Activated CD8-positive, alpha-beta T cell treated with anti-CD3 and anti-CD28 coated beads, Interleukin-2, amount 10 ng/mL, durations not matched to agents 7 days and 5 days (primary cell): ENCODE measurements at regions of chr6 and their contacts with region 1.

Region 1: GRCh38 chr6:130223508-130223907 is 757 bp upstream of the SAMD3 start:
- DNase-seq: peak; percentile 86
- ATAC-seq: peak; percentile 97
- H3K4me3 Mint-ChIP-seq: peak overlapping the region; percentile 31
- H3K27ac Mint-ChIP-seq: peak overlapping the region; percentile 90
- H3K4me1 Mint-ChIP-seq: peaks cover 32% of the 10 kb centered on the region
- H3K27me3 Mint-ChIP-seq: no peaks in the 10 kb centered on the region

Region 2: DNA sequence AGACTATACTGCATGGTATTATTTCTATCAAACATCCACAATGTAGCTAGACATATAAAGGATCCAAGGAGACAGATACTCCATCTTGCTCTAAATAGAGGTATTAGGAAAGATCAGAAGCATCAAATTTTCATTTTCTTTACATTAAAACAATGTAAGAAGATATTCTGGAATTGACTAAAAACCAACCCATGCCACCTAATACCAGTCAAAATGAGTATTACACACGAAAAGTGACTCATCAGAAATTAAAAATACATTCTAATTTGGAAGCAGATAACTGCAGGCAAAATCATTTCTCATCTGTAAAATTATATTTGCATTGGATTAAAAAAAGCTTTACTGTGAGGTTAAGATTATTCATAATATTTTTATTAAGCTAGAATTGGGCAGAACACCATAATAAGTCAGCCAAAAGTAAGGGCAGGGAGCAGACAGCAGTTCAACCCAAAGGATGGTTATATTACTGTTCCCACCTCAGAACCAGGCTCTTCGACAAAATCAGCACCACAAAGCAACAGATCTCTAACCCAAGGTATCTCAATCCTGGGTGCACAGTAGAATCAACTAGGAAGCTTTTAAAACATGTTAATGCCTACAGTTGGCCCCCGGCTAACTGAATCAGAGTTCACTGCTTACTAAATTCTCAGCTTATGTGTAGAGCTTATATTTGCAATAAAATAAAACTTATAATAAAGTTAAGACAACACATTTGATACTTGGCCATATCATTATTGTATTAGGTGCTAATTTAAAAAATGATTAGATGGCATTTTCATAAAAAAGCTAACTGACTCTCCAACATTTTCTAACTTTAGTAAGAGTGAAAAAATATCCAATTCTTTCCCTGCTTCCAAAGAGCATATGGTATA is 35.9 kb before region 1 on chr6:
- CTCF ChIA-PET with region 1: interaction called, 10 read pairs
- POLR2A ChIA-PET with region 1: interaction called, 4 read pairs
- DNase-seq: no peak
- ATAC-seq: no peak
- H3K4me3 Mint-ChIP-seq: no peak overlapping the region
- H3K27ac Mint-ChIP-seq: peak overlapping the region; percentile 23
- H3K4me1 Mint-ChIP-seq: peaks cover 75% of the 10 kb centered on the region
- H3K27me3 Mint-ChIP-seq: no peaks in the 10 kb centered on the region

Region 3: GRCh38 chr6:130211691-130212090 is 11.8 kb before region 1 on chr6:
- CTCF ChIA-PET with region 1: interaction called, 10 read pairs
- POLR2A ChIA-PET with region 1: interaction called, 3 read pairs
- DNase-seq: no peak
- ATAC-seq: no peak
- H3K4me3 Mint-ChIP-seq: peak overlapping the region; percentile 63
- H3K27ac Mint-ChIP-seq: no peak overlapping the region
- H3K4me1 Mint-ChIP-seq: peaks cover 58% of the 10 kb centered on the region
- H3K27me3 Mint-ChIP-seq: no peaks in the 10 kb centered on the region